Activated CD4-positive, alpha-beta T cell treated with anti-CD3 and anti-CD28 coated beads for 36 hours (primary cell): ENCODE measurements at regions of chr17 and their contacts with region 1.

Region 1: DNA sequence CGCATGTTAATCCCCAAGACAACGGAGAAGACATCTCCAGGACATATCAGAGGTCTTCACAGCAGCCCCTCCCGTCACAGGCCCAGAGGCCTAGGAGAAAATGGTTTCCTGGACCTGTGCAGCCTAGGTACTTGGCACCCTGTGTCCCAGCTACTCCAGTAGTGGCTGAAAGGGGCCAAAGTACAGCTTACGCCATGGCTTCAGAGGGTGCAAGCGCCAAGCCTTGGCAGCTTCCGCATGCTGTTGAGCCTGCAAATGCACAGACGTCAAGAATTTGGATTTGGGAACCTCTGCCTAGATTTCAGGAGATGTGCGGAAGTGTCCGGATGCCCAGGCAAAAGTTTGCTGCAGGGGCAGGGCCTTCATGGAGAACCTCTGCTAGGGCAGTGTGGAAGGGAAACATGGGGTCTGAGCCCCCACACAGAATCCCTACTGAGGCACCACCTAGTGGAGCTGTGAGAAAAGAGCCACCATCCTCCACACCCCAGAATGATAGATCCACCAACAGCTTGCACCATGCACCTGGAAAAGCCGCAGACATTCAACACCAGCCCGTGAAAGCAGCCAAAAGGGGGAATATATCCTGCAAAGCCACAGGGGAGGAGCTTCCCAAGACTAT is 159.3 kb upstream of the COX10 start:
- DNase-seq: no peak
- ATAC-seq: no peak
- H3K4me3 Mint-ChIP-seq: no peak overlapping the region
- H3K27ac Mint-ChIP-seq: no peak overlapping the region
- H3K4me1 Mint-ChIP-seq: no peaks in the 10 kb centered on the region
- H3K27me3 Mint-ChIP-seq: no peaks in the 10 kb centered on the region

Region 2: DNA sequence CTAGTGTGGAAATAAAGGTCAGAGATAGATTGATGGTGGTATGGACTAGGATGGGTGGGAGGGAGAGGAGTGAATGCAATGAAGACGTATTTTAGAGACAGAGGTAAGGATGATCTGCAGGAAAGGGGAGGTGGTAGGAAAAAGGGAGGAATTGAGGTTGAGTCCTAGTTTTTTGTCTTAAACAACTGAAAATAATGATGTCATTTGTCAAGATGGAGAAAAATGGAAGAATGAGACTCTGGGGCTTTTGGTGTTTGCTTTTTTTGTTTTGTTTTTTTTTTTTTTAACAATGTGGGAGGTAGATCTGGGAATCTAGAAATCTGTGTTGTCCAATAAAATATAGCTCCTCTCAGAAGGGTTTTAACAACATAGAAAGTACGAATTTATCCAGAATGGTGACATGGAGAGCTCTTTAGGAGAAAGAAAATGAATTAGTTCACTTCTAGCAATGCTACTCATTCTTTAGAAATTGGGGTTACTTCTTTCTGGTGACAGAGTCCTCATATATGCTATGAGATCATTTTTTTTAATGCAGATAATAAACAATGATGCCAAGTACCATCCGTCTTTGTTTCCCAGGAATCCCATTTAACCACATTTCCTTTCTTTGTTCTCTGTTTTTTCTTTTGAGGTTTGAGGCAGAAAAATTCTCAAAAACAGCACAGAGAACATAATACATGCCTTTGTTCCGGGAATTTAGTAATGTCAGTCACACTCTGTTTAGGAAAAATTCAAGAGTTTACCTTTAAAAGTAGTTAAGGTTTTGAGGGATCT is 66.0 kb before region 1 on chr17:
- CTCF ChIA-PET with region 1: no interaction called
- POLR2A ChIA-PET with region 1: no interaction called
- intact Hi-C with region 1: loop called in 1 of 2 experiments (anchors 10 kb)
- DNase-seq: no peak
- ATAC-seq: no peak
- H3K4me3 Mint-ChIP-seq: no peak overlapping the region
- H3K27ac Mint-ChIP-seq: no peak overlapping the region
- H3K4me1 Mint-ChIP-seq: peaks cover 9% of the 10 kb centered on the region
- H3K27me3 Mint-ChIP-seq: no peaks in the 10 kb centered on the region

Region 3: GRCh38 chr17:13933441-13934276 is 23.6 kb after region 1 on chr17:
- CTCF ChIA-PET with region 1: no interaction called
- POLR2A ChIA-PET with region 1: no interaction called
- intact Hi-C with region 1: no loop called
- DNase-seq: no peak
- ATAC-seq: no peak
- H3K4me3 Mint-ChIP-seq: no peak overlapping the region
- H3K27ac Mint-ChIP-seq: no peak overlapping the region
- H3K4me1 Mint-ChIP-seq: no peaks in the 10 kb centered on the region
- H3K27me3 Mint-ChIP-seq: no peaks in the 10 kb centered on the region